AG04450 (cell line): ENCODE measurements at regions of chr1 and their contacts with region 1.

Region 1: GRCh38 chr1:226332947-226333346 is 24.0 kb upstream of the LIN9 start:
- DNase-seq: no peak
- H3K4me3 ChIP-seq: peak overlapping the region; percentile 38
- H3K27ac ChIP-seq: no peak overlapping the region
- H3K27me3 ChIP-seq: peaks cover 11% of the 10 kb centered on the region
- CTCF ChIP-seq: no peak

Region 2: GRCh38 chr1:226201029-226201593 is 131.8 kb before region 1 on chr1:
- CTCF ChIA-PET with region 1: interaction called, 10 read pairs
- POLR2A ChIA-PET with region 1: no interaction called
- DNase-seq: no peak
- H3K4me3 ChIP-seq: no peak overlapping the region
- H3K27ac ChIP-seq: no peak overlapping the region
- H3K27me3 ChIP-seq: peaks cover 6% of the 10 kb centered on the region
- CTCF ChIP-seq: peak; percentile 53

Region 3: GRCh38 chr1:226314055-226314454 is 18.9 kb before region 1 on chr1:
- CTCF ChIA-PET with region 1: interaction called, 10 read pairs
- POLR2A ChIA-PET with region 1: no interaction called
- DNase-seq: no peak
- H3K4me3 ChIP-seq: no peak overlapping the region
- H3K27ac ChIP-seq: no peak overlapping the region
- H3K27me3 ChIP-seq: peaks cover 2% of the 10 kb centered on the region
- CTCF ChIP-seq: no peak

Region 4: GRCh38 chr1:226360106-226360746 is 27.3 kb after region 1 on chr1:
- CTCF ChIA-PET with region 1: no interaction called
- POLR2A ChIA-PET with region 1: no interaction called
- DNase-seq: no peak
- H3K4me3 ChIP-seq: no peak overlapping the region
- H3K27ac ChIP-seq: no peak overlapping the region
- H3K27me3 ChIP-seq: no peaks in the 10 kb centered on the region
- CTCF ChIP-seq: no peak